ENCODE measurements at regions of chr1 and their contacts with region 1.

Region 1: DNA sequence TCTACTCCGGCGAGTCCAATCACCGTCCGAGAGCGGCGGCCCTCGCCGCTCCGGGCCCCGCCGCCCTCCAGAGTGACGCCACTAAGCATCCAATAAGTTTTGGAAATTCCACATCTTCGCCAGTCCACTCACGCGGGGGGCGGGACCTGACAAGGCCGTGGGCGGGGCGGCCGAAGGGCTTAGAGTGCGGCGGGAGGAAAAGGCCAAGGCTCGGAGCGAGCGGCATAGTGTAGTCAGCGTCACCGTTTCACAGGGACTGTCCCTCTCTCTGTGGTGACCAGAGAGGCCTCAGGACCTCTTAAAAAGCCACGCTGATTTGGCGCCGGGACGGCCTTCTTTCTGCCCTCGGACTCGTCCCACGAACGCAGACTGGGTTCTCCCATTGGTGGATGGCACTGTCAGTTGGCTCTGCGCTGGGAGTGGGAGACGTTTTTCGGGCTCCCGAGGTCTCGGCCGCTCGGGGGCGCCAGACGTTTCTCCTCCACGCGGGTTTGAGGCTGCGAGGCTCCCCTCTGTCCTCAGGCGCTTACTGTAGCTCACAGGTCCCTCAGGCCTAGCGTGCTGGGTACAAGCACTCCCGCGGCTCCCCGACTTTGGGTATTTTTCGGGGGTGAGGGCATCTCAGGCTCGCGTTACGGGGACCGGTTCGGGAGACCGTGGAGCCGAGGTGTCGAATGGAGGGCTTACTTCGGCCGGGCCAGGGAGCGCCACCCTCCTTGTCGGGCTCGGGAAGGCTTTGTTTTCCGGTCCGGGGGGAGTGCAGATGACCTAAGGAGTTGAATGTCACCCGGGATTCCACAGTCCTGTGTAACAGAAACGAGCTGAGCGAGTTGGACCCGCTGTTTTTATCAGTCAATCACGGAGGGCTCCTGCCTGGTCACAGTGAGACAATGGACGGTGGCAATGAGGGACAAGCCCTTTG is 488 bp upstream of the TRIM45 start:
- DNase-seq: peak; percentile 98
- H3K4me3 ChIP-seq: peak overlapping the region; percentile 62 to 82 (median 72)
- H3K27ac ChIP-seq: peak overlapping the region; percentile 86 to 89 (median 88)
- H3K4me1 ChIP-seq: peaks cover 0 to 19% (median 13%) of the 10 kb centered on the region in 4 donors
- H3K27me3 ChIP-seq: no peaks in the 10 kb centered on the region
- CTCF ChIP-seq: peak; percentile 58 to 68 (median 66)
- EP300 ChIP-seq: peak in 1 of 4 donors; percentile 12
- POLR2A ChIP-seq: peak in 1 of 2 donors; percentile 4

Region 2: GRCh38 chr1:117284399-117285215 is 162.6 kb after region 1 on chr1:
- intact Hi-C with region 1: loop called (anchors 10 kb)
- DNase-seq: no peak
- H3K4me3 ChIP-seq: no peak overlapping the region
- H3K27ac ChIP-seq: no peak overlapping the region
- H3K4me1 ChIP-seq: no peaks in the 10 kb centered on the region
- H3K27me3 ChIP-seq: no peaks in the 10 kb centered on the region
- CTCF ChIP-seq: peak in 2 of 4 experiments; percentile 21 to 25
- EP300 ChIP-seq: no peak
- POLR2A ChIP-seq: no peak

Region 3: GRCh38 chr1:117367047-117368018 is 245.3 kb after region 1 on chr1 and contains the start of gene MAN1A2:
- intact Hi-C with region 1: loop called (anchors 2 kb)
- DNase-seq: peak; percentile 95
- H3K4me3 ChIP-seq: peak within 1 kb of the TSS; percentile 79 to 88 (median 83)
- H3K27ac ChIP-seq: peak within 1 kb of the TSS; percentile 97 to 99 (median 98)
- H3K4me1 ChIP-seq: peaks cover 0 to 66% (median 54%) of the 10 kb centered on the region in 4 donors
- H3K27me3 ChIP-seq: no peaks in the 10 kb centered on the region
- CTCF ChIP-seq: no peak
- EP300 ChIP-seq: no peak
- POLR2A ChIP-seq: peak; percentile 65 to 82
- total RNA-seq, gene MAN1A2: 36.8 to 52.8 (median 43.4) TPM

Region 4: DNA sequence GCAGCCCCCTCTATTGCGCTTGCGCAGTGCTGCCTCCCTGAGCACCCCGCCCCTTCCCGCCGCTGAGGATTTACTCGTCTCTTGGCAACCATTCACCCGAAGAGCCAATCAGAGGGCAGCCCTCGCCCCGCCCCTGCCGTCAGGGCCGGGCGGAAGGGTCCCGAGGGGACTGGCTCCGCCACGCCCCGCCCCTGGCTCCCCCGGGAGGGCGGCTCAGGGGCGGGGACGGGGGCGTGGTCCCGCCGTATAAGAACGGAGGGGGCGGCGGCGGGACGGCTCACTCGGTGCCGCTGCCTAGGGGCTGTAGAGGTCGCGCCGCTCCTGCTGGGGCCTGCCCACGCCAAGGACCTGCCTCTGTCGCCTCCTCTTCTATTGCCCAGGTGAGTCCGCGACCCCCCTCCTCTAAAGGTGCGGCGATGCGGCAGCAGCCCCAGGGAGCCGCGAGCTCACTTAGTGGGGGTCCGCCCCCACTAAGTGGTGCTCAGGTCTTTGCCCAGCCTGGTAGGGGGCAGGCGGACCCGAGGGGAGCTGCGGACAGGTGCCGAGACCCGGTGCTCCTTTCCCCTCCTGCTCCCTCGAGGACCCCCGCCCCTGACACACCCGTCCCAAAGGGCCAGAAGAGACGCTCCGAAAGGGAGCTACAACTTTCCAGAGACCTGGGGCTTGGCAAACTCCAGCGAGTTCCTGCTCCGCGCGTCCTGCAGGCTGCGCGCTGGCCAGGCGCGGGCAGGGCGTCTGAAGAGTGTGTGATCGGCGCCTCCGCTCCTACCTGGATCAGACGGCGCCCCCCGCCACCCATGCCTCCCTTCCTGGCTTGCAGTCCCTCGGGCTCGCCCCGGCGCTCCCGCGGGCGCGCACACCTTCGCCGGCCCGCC is 484.0 kb after region 1 on chr1 and contains the start of gene TENT5C:
- intact Hi-C with region 1: loop called (anchors 10 kb)
- DNase-seq: peak; percentile 99
- H3K4me3 ChIP-seq: peak within 1 kb of the TSS; percentile 55 to 82 (median 68)
- H3K27ac ChIP-seq: peak within 1 kb of the TSS; percentile 75 to 89 (median 88)
- H3K4me1 ChIP-seq: peaks cover 0 to 35% (median 27%) of the 10 kb centered on the region in 4 donors
- H3K27me3 ChIP-seq: no peaks in the 10 kb centered on the region
- CTCF ChIP-seq: no peak
- EP300 ChIP-seq: peak in 1 of 4 donors; percentile 42
- POLR2A ChIP-seq: peak; percentile 72 to 75
- total RNA-seq, gene TENT5C: 2.8 to 7.1 (median 5.1) TPM

Region 5: GRCh38 chr1:117929173-117929989 is 807.3 kb after region 1 on chr1 and contains the starts of genes GDAP2 and WDR3:
- intact Hi-C with region 1: loop called (anchors 5 kb)
- DNase-seq: peak; percentile 98
- H3K4me3 ChIP-seq: peak within 1 kb of the TSS; percentile 68 to 92 (median 89)
- H3K27ac ChIP-seq: peak within 1 kb of the TSS; percentile 86 to 92 (median 90)
- H3K4me1 ChIP-seq: peaks cover 0 to 37% (median 26%) of the 10 kb centered on the region in 4 donors
- H3K27me3 ChIP-seq: no peaks in the 10 kb centered on the region
- CTCF ChIP-seq: no peak
- EP300 ChIP-seq: no peak
- POLR2A ChIP-seq: peak; percentile 24 to 36
- total RNA-seq, gene GDAP2: 19.6 to 33.8 (median 22.3) TPM
- total RNA-seq, gene WDR3: 2.5 to 9.6 (median 5.9) TPM

Region 6: DNA sequence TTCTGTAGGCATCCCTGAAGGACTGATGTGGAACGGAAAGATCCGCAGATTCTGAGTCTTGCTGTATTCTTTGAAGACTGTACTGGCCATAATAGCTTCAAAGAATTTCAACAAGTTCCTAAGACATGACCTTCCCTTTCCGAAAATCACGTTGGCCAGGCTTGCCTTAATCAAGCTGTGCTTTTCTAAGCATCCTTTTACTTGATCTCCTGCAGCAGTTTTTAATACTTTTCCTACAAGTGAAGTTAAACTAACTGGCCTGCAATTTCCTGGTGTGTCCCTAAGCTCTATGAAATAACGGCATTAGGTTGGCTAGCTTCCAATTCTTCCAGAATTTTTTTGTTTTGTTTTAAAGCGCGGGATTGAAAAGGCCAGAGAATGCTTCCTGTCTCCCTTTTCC is 1022.6 kb after region 1 on chr1:
- intact Hi-C with region 1: no loop called
- DNase-seq: no peak
- H3K4me3 ChIP-seq: no peak overlapping the region
- H3K27ac ChIP-seq: no peak overlapping the region
- H3K4me1 ChIP-seq: no peaks in the 10 kb centered on the region
- H3K27me3 ChIP-seq: no peaks in the 10 kb centered on the region
- CTCF ChIP-seq: no peak
- EP300 ChIP-seq: no peak
- POLR2A ChIP-seq: no peak

Measured in sigmoid colon (tissue), 7 donors.